ENCODE measurements at regions of chr16 and their contacts with region 1.

Region 1: GRCh38 chr16:84044118-84044488 is 1.5 kb upstream of the SLC38A8 start:
- DNase-seq: no peak
- H3K4me3 ChIP-seq: no peak overlapping the region
- H3K27me3 ChIP-seq: peaks cover 26% of the 10 kb centered on the region
- CTCF ChIP-seq: peak; percentile 52

Region 2: GRCh38 chr16:83942815-83943515 is 101.1 kb before region 1 on chr16:
- CTCF ChIA-PET with region 1: no interaction called
- POLR2A ChIA-PET with region 1: no interaction called
- DNase-seq: no peak
- H3K4me3 ChIP-seq: no peak overlapping the region
- H3K27me3 ChIP-seq: no peaks in the 10 kb centered on the region
- CTCF ChIP-seq: no peak

Region 3: GRCh38 chr16:84022644-84023043 is 21.5 kb before region 1 on chr16:
- CTCF ChIA-PET with region 1: interaction called, 10 read pairs
- POLR2A ChIA-PET with region 1: no interaction called
- DNase-seq: no peak
- H3K4me3 ChIP-seq: no peak overlapping the region
- H3K27me3 ChIP-seq: no peaks in the 10 kb centered on the region; the same call in none of the 2 replicates
- CTCF ChIP-seq: no peak